Activated CD8-positive, alpha-beta T cell treated with anti-CD3 and anti-CD28 coated beads for 36 hours (primary cell): ENCODE measurements at regions of chr9 and their contacts with region 1.

Region 1: GRCh38 chr9:107557231-107557990 is 67.8 kb upstream of the KLF4 start:
- DNase-seq: no peak
- ATAC-seq: no peak
- H3K4me3 Mint-ChIP-seq: no peak overlapping the region
- H3K27ac Mint-ChIP-seq: no peak overlapping the region
- H3K4me1 Mint-ChIP-seq: no peaks in the 10 kb centered on the region
- H3K27me3 Mint-ChIP-seq: no peaks in the 10 kb centered on the region
- CTCF ChIP-seq: no peak

Region 2: DNA sequence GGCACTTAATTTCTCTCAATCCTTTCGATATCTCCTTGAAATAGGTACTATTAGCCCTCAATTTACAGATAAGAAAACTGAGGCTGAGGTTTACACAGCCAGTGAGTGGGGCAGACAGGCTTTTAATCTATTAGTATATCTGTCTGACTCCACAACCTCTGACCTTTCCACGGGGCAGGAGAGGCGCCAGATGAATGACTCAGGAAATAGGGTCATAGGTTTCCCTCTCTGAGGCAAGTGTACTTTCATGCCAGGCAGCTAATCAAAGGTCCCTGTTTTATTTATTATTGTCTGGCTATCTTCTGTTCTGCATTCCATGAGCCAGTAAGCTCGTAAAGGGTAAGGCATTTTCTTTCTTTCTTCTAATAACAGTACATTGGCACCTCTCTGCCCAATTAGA is 11.8 kb after region 1 on chr9:
- CTCF ChIA-PET with region 1: no interaction called
- POLR2A ChIA-PET with region 1: no interaction called
- intact Hi-C with region 1: no loop called
- DNase-seq: no peak
- ATAC-seq: no peak
- H3K4me3 Mint-ChIP-seq: no peak overlapping the region
- H3K27ac Mint-ChIP-seq: no peak overlapping the region
- H3K4me1 Mint-ChIP-seq: no peaks in the 10 kb centered on the region
- H3K27me3 Mint-ChIP-seq: no peaks in the 10 kb centered on the region
- CTCF ChIP-seq: no peak

Region 3: GRCh38 chr9:107644733-107645463 is 87.5 kb after region 1 on chr9:
- CTCF ChIA-PET with region 1: no interaction called
- POLR2A ChIA-PET with region 1: no interaction called
- intact Hi-C with region 1: loop called (anchors 10 kb)
- DNase-seq: no peak
- ATAC-seq: no peak
- H3K4me3 Mint-ChIP-seq: no peak overlapping the region
- H3K27ac Mint-ChIP-seq: no peak overlapping the region
- H3K4me1 Mint-ChIP-seq: no peaks in the 10 kb centered on the region
- H3K27me3 Mint-ChIP-seq: peaks cover 10% of the 10 kb centered on the region
- CTCF ChIP-seq: no peak